ENCODE measurements at regions of chrX and their contacts with region 1.

Region 1: GRCh38 chrX:49029876-49030275 is 13.3 kb downstream of the TFE3 start:
- DNase-seq: no peak
- H3K4me3 ChIP-seq: no peak overlapping the region
- H3K27ac ChIP-seq: no peak overlapping the region
- H3K4me1 ChIP-seq: peaks cover 6% of the 10 kb centered on the region
- H3K27me3 ChIP-seq: no peaks in the 10 kb centered on the region
- CTCF ChIP-seq: no peak
- POLR2A ChIP-seq: no peak

Region 2: GRCh38 chrX:48966796-48967579 is 62.9 kb before region 1 on chrX:
- intact Hi-C with region 1: loop called (anchors 10 kb)
- DNase-seq: no peak
- H3K4me3 ChIP-seq: no peak overlapping the region
- H3K27ac ChIP-seq: no peak overlapping the region
- H3K4me1 ChIP-seq: peaks cover 2% of the 10 kb centered on the region
- H3K27me3 ChIP-seq: no peaks in the 10 kb centered on the region
- CTCF ChIP-seq: no peak
- POLR2A ChIP-seq: no peak